AG04450 (cell line): ENCODE measurements at regions of chr11 and their contacts with region 1.

Region 1: GRCh38 chr11:5123802-5124521 is 14.2 kb downstream of the OR52A5 start:
- DNase-seq: peak; percentile 54
- H3K4me3 ChIP-seq: no peak overlapping the region
- H3K27ac ChIP-seq: no peak overlapping the region
- H3K27me3 ChIP-seq: no peaks in the 10 kb centered on the region
- CTCF ChIP-seq: peak; percentile 95

Region 2: GRCh38 chr11:5107285-5107684 is 16.7 kb before region 1 on chr11:
- CTCF ChIA-PET with region 1: interaction called, 10 read pairs
- POLR2A ChIA-PET with region 1: no interaction called
- DNase-seq: no peak
- H3K4me3 ChIP-seq: no peak overlapping the region
- H3K27ac ChIP-seq: no peak overlapping the region
- H3K27me3 ChIP-seq: no peaks in the 10 kb centered on the region
- CTCF ChIP-seq: no peak

Region 3: GRCh38 chr11:5204787-5205186 is 80.8 kb after region 1 on chr11:
- CTCF ChIA-PET with region 1: interaction called, 24 read pairs
- POLR2A ChIA-PET with region 1: no interaction called
- DNase-seq: peak; percentile 58
- H3K4me3 ChIP-seq: no peak overlapping the region
- H3K27ac ChIP-seq: no peak overlapping the region
- H3K27me3 ChIP-seq: no peaks in the 10 kb centered on the region
- CTCF ChIP-seq: peak; percentile 67

Region 4: GRCh38 chr11:5364214-5364613 is 240.3 kb after region 1 on chr11:
- CTCF ChIA-PET with region 1: interaction called, 15 read pairs
- POLR2A ChIA-PET with region 1: no interaction called
- DNase-seq: peak; percentile 87
- H3K4me3 ChIP-seq: no peak overlapping the region
- H3K27ac ChIP-seq: peak overlapping the region; percentile 88
- H3K27me3 ChIP-seq: no peaks in the 10 kb centered on the region
- CTCF ChIP-seq: no peak

Region 5: GRCh38 chr11:5369793-5370192 is 245.8 kb after region 1 on chr11:
- CTCF ChIA-PET with region 1: interaction called, 58 read pairs
- POLR2A ChIA-PET with region 1: interaction called, 3 read pairs
- DNase-seq: peak; percentile 75
- H3K4me3 ChIP-seq: no peak overlapping the region
- H3K27ac ChIP-seq: no peak overlapping the region
- H3K27me3 ChIP-seq: no peaks in the 10 kb centered on the region
- CTCF ChIP-seq: peak; percentile 84

Region 6: GRCh38 chr11:5380740-5381342 is 256.9 kb after region 1 on chr11:
- CTCF ChIA-PET with region 1: interaction called, 82 read pairs
- POLR2A ChIA-PET with region 1: no interaction called
- DNase-seq: peak; percentile 55
- H3K4me3 ChIP-seq: no peak overlapping the region
- H3K27ac ChIP-seq: no peak overlapping the region
- H3K27me3 ChIP-seq: no peaks in the 10 kb centered on the region
- CTCF ChIP-seq: peak; percentile 93